Activated T-helper 1 cell treated with anti-CD3 and anti-CD28 coated beads, Interleukin-12 subunit alpha, Interleukin-12 subunit beta, Interleukin-2, Interleukin-4 antibody, amounts not matched to agents 30 ng/mL and 10 ng/mL and 1 ng/mL, durations not matched to agents 14 hours and 24 hours and 36 hours (primary cell): ENCODE measurements at regions of chr12 and their contacts with region 1.

Region 1: DNA sequence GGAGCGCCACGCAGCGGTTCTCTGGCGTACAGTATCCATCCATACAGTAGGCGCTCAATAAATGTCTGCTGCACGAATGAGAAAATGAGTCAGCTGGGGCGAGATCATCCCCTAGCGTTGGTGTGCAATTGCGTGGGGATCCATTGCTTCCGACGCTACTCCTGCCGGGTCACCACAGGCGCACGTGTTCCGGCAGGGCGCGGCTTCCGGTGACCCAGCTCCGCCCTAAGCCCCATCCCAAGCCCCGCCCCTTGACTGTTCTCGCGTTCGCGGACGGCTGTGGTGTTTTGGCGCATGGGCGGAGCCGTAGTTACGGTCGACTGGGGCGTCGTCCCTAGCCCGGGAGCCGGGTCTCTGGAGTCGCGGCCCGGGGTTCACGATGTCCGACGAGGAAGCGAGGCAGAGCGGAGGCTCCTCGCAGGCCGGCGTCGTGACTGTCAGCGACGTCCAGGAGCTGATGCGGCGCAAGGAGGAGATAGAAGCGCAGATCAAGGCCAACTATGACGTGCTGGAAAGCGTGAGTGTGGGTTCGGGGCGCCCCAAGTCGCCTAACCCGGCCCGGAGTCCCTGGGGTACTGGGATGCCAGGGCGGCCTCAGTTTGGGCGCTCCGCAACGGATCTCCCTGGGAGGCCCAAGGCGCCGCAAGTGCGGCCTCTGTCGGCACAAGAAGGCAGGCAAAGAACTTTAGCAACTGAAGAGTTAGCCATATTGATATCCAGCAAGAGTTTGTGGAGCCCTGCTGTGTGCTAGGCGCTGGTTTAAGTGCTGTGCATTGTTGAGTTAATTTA is at the start of gene PSMD9:
- DNase-seq: peak; percentile 98
- H3K4me3 Mint-ChIP-seq: peak within 1 kb of the TSS; percentile 99
- H3K27ac Mint-ChIP-seq: peak within 1 kb of the TSS; percentile 99
- H3K4me1 Mint-ChIP-seq: peaks cover 35% of the 10 kb centered on the region
- H3K27me3 Mint-ChIP-seq: peaks cover 2% of the 10 kb centered on the region
- total RNA-seq, gene PSMD9: 63.9 and 67.5 TPM in 2 replicates

Region 2: GRCh38 chr12:121579981-121580868 is 308.4 kb before region 1 on chr12:
- intact Hi-C with region 1: loop called (anchors 1 kb)
- DNase-seq: peak; percentile 67
- H3K4me3 Mint-ChIP-seq: peak overlapping the region; percentile 98
- H3K27ac Mint-ChIP-seq: peak overlapping the region; percentile 100
- H3K4me1 Mint-ChIP-seq: peaks cover 40% of the 10 kb centered on the region
- H3K27me3 Mint-ChIP-seq: no peaks in the 10 kb centered on the region

Region 3: GRCh38 chr12:121712461-121713256 is 176.0 kb before region 1 on chr12 and contains the start of gene TMEM120B:
- intact Hi-C with region 1: loop called (anchors 1 kb)
- DNase-seq: peak; percentile 83
- H3K4me3 Mint-ChIP-seq: peak within 1 kb of the TSS; percentile 97
- H3K27ac Mint-ChIP-seq: peak within 1 kb of the TSS; percentile 91
- H3K4me1 Mint-ChIP-seq: peaks cover 28% of the 10 kb centered on the region
- H3K27me3 Mint-ChIP-seq: peaks cover 4% of the 10 kb centered on the region
- total RNA-seq, gene TMEM120B: 17.5 and 18.3 TPM in 2 replicates

Region 4: GRCh38 chr12:121802846-121803630 is 85.6 kb before region 1 on chr12:
- intact Hi-C with region 1: loop called (anchors 1 kb)
- DNase-seq: peak; percentile 83
- H3K4me3 Mint-ChIP-seq: peak overlapping the region; percentile 87
- H3K27ac Mint-ChIP-seq: peak overlapping the region; percentile 97
- H3K4me1 Mint-ChIP-seq: peaks cover 40% of the 10 kb centered on the region
- H3K27me3 Mint-ChIP-seq: peaks cover 2% of the 10 kb centered on the region

Region 5: GRCh38 chr12:121917979-121918678 is 29.5 kb after region 1 on chr12 and contains the start of gene CFAP251:
- intact Hi-C with region 1: loop called (anchors 1 kb)
- DNase-seq: peak; percentile 92
- H3K4me3 Mint-ChIP-seq: peak within 1 kb of the TSS; percentile 80
- H3K27ac Mint-ChIP-seq: peak within 1 kb of the TSS; percentile 71
- H3K4me1 Mint-ChIP-seq: peaks cover 15% of the 10 kb centered on the region
- H3K27me3 Mint-ChIP-seq: peaks cover 2% of the 10 kb centered on the region
- total RNA-seq, gene CFAP251: 0.65 and 0.76 TPM in 2 replicates

Region 6: GRCh38 chr12:122413516-122414404 is 525.1 kb after region 1 on chr12:
- intact Hi-C with region 1: no loop called
- DNase-seq: no peak
- H3K4me3 Mint-ChIP-seq: peak overlapping the region; percentile 64
- H3K27ac Mint-ChIP-seq: peak overlapping the region; percentile 91
- H3K4me1 Mint-ChIP-seq: peaks cover 34% of the 10 kb centered on the region
- H3K27me3 Mint-ChIP-seq: no peaks in the 10 kb centered on the region